MCF 10A (cell line): ENCODE measurements at regions of chr6 and their contacts with region 1.

Region 1: DNA sequence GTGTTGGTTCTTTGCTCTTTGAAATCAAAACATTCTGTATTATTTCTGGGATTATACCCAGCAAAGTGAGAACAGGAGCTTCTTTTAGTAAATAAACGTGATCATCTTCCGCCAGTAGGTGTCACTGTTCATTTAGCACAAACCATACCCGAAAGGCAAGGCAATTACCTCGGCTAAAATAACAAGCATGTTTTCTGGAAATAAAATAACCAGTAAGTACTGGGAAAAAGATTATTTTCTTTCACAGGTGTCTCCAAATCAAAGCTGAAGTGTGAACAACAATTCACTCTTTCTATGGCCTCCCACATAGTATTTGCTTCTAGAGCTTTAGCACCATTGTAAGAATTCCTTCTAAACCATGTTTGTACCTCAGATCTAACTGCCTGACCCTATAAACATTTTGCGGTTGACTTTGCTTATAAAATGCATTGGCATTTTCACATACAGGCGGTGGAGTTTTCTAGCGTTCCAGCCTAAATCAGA is 144.6 kb upstream of the AGPAT4 start:
- DNase-seq: peak; percentile 82
- H3K4me3 Mint-ChIP-seq: no peak overlapping the region
- H3K27ac Mint-ChIP-seq: no peak overlapping the region
- H3K4me1 Mint-ChIP-seq: no peaks in the 10 kb centered on the region
- H3K27me3 Mint-ChIP-seq: no peaks in the 10 kb centered on the region
- CTCF ChIP-seq: peak; percentile 70

Region 2: GRCh38 chr6:161400671-161401070 is 17.8 kb before region 1 on chr6:
- CTCF ChIA-PET with region 1: interaction called, 77 read pairs
- POLR2A ChIA-PET with region 1: interaction called, 4 read pairs
- intact Hi-C with region 1: no loop called
- DNase-seq: no peak
- H3K4me3 Mint-ChIP-seq: no peak overlapping the region
- H3K27ac Mint-ChIP-seq: no peak overlapping the region
- H3K4me1 Mint-ChIP-seq: peaks cover 7% of the 10 kb centered on the region
- H3K27me3 Mint-ChIP-seq: no peaks in the 10 kb centered on the region
- CTCF ChIP-seq: no peak

Region 3: GRCh38 chr6:161429921-161430490 is 11.5 kb after region 1 on chr6:
- CTCF ChIA-PET with region 1: interaction called, 35 read pairs
- POLR2A ChIA-PET with region 1: interaction called, 4 read pairs
- intact Hi-C with region 1: no loop called
- DNase-seq: no peak
- H3K4me3 Mint-ChIP-seq: no peak overlapping the region
- H3K27ac Mint-ChIP-seq: no peak overlapping the region
- H3K4me1 Mint-ChIP-seq: peaks cover 11% of the 10 kb centered on the region
- H3K27me3 Mint-ChIP-seq: no peaks in the 10 kb centered on the region
- CTCF ChIP-seq: no peak

Region 4: GRCh38 chr6:161486361-161487216 is 68.1 kb after region 1 on chr6:
- CTCF ChIA-PET with region 1: interaction called, 13 read pairs
- POLR2A ChIA-PET with region 1: interaction called, 8 read pairs
- intact Hi-C with region 1: no loop called
- DNase-seq: peak; percentile 84
- H3K4me3 Mint-ChIP-seq: no peak overlapping the region
- H3K27ac Mint-ChIP-seq: peak overlapping the region; percentile 23
- H3K4me1 Mint-ChIP-seq: peaks cover 8% of the 10 kb centered on the region
- H3K27me3 Mint-ChIP-seq: no peaks in the 10 kb centered on the region
- CTCF ChIP-seq: no peak

Region 5: DNA sequence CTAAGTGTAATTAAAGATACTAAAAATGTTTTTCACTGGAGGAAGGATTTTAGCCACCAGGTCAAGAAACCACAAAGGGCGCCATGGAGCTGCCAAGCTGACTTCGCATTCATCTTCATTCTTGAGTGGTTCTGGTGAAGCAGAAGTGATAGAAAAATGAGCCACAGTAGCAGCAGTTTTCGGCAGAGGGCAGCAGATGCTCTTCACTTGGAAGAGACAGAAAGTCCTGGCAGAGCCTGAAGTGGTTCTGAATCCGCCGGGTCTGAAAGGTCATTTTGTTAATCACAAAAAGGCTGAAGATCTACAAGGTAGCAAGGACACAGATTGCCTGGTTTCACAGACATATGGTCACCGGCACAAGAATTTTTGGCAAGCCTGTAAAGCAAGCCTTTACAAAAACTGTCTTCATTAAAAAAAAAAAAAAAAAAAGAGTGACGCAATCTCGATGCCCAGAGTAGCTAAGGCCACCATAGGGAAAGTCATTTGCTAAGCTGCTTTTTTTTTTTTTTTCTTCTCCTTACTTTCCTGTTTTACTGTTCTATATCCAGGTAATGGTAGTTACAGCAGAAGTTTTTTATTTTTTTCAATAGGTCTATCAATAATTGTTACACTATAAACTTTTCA is 200.4 kb after region 1 on chr6:
- CTCF ChIA-PET with region 1: interaction called, 7 read pairs
- POLR2A ChIA-PET with region 1: no interaction called
- intact Hi-C with region 1: loop called (anchors 5 kb)
- DNase-seq: peak; percentile 76
- H3K4me3 Mint-ChIP-seq: peak overlapping the region; percentile 49
- H3K27ac Mint-ChIP-seq: no peak overlapping the region
- H3K4me1 Mint-ChIP-seq: no peaks in the 10 kb centered on the region
- H3K27me3 Mint-ChIP-seq: no peaks in the 10 kb centered on the region
- CTCF ChIP-seq: peak; percentile 63